Activated B cell treated with CpG ODN at 0.5 μM for 24 hours (primary cell): ENCODE measurements at regions of chr9 and their contacts with region 1.

Region 1: DNA sequence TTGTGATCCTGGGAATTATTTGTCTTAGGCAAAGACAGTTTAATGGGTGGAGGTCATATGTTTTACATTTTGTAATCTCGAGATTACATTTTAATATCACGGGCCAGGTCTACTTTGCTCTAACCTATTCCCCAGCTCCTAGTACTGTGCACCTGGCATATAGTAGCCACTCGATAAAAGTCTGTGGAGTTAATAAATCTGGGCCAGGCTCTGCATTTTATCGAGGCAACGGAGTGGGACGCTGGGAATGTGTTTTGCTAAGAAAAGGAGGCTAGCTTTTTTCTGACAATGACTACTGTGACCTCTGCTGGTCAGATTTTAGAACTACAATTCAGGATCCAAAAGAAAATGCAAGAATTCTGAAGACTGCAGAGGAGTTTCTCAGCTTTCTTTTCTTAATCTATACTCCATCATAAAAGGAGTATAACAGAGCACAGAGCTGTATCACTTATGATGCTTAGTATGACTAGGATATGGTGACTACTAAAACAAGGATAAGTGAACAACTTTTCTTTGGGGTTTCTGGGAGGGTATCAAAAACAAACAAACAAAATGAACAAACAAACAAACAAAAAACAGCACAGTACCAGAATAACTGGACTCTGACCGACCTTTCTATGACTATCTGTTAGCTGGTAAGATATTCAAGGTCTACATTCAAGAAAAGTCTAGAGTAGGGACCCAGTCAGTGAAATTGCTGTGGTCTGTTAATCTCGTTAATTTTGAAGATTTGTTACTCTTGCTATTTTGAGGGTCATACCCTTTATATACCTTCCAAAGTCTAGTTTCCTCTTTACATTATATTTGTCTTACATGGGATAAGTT is 46.1 kb upstream of the CER1 start:
- DNase-seq: no peak
- ATAC-seq: no peak
- H3K4me3 Mint-ChIP-seq: no peak overlapping the region
- H3K27ac Mint-ChIP-seq: no peak overlapping the region
- H3K4me1 Mint-ChIP-seq: no peaks in the 10 kb centered on the region
- H3K27me3 Mint-ChIP-seq: peaks cover 24% of the 10 kb centered on the region
- CTCF ChIP-seq: peak; percentile 84

Region 2: DNA sequence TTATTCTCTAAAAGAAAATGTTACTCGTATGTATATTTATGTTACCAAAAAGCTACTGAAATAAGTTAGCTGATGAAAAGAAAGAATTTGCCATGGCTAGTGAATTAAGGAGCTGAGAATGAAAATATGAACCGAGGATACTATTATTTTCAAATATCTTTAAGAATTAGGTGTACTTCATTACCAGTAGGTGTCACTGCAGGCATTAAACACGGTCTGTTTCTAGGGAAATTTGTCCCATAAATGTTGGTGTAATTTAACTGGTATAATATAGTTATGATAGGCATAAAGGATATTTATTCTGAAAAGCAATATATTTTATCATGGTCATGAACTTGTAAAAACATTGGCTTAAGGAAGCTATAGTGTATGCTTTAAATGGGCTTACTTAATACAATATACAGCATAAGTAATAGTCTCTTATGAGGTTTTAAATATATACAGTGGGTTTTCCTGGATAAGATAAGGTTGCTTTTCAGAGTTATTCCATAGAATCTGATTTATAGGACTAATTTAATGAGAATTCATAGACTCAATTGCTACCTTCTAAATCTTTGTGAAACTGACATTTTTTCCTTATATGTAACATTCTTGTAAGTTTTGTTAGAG is 1416.7 kb before region 1 on chr9:
- CTCF ChIA-PET with region 1: no interaction called
- POLR2A ChIA-PET with region 1: no interaction called
- intact Hi-C with region 1: loop called (anchors 5 kb)
- DNase-seq: no peak
- ATAC-seq: no peak
- H3K4me3 Mint-ChIP-seq: no peak overlapping the region
- H3K27ac Mint-ChIP-seq: no peak overlapping the region
- H3K4me1 Mint-ChIP-seq: no peaks in the 10 kb centered on the region
- H3K27me3 Mint-ChIP-seq: no peaks in the 10 kb centered on the region
- CTCF ChIP-seq: no peak

Region 3: GRCh38 chr9:14353222-14354056 is 415.2 kb before region 1 on chr9:
- CTCF ChIA-PET with region 1: interaction called, 3 read pairs
- POLR2A ChIA-PET with region 1: no interaction called
- intact Hi-C with region 1: loop called (anchors 2 kb)
- DNase-seq: peak; percentile 51
- ATAC-seq: no peak
- H3K4me3 Mint-ChIP-seq: no peak overlapping the region
- H3K27ac Mint-ChIP-seq: no peak overlapping the region
- H3K4me1 Mint-ChIP-seq: peaks cover 7% of the 10 kb centered on the region
- H3K27me3 Mint-ChIP-seq: peaks cover 57% of the 10 kb centered on the region
- CTCF ChIP-seq: no peak

Region 4: GRCh38 chr9:14441976-14442651 is 326.5 kb before region 1 on chr9:
- CTCF ChIA-PET with region 1: interaction called, 6 read pairs
- POLR2A ChIA-PET with region 1: no interaction called
- intact Hi-C with region 1: loop called (anchors 5 kb)
- DNase-seq: no peak
- ATAC-seq: no peak
- H3K4me3 Mint-ChIP-seq: no peak overlapping the region
- H3K27ac Mint-ChIP-seq: no peak overlapping the region
- H3K4me1 Mint-ChIP-seq: no peaks in the 10 kb centered on the region
- H3K27me3 Mint-ChIP-seq: no peaks in the 10 kb centered on the region
- CTCF ChIP-seq: no peak

Region 5: GRCh38 chr9:14466429-14466818 is 302.2 kb before region 1 on chr9:
- CTCF ChIA-PET with region 1: interaction called, 3 read pairs
- POLR2A ChIA-PET with region 1: no interaction called
- intact Hi-C with region 1: loop called (anchors 1 kb)
- DNase-seq: no peak
- ATAC-seq: no peak
- H3K4me3 Mint-ChIP-seq: no peak overlapping the region
- H3K27ac Mint-ChIP-seq: no peak overlapping the region
- H3K4me1 Mint-ChIP-seq: no peaks in the 10 kb centered on the region
- H3K27me3 Mint-ChIP-seq: peaks cover 3% of the 10 kb centered on the region
- CTCF ChIP-seq: no peak

Region 6: DNA sequence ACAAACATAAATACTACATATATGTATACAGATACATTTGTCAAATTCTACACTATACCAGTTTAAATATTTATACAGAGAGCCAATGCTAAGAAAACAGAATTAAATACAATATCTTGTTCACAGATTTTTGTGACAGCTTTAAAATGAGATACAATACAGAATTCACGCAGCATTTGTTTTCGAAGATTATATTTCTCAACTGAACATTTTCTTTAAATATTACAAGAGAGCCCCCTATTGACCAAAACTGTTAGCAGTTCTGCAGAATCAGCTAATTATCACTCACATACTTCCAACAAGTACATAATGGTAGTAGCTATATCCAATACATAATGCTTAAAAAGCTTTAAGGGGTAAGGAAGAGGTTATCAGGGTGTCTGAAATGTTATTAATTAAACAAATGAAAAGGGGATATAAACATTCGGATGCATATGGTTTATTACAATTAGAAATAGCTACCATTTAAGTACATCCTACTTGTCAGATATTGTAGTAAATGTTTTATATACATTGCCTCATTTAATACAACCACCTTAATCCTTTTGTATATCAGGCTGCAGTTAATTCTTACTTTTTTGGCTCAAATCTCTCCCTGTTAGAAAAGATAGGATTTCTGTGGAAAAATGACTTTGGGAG is 107.1 kb before region 1 on chr9:
- CTCF ChIA-PET with region 1: interaction called, 7 read pairs
- POLR2A ChIA-PET with region 1: no interaction called
- intact Hi-C with region 1: loop called (anchors 2 kb)
- DNase-seq: no peak
- ATAC-seq: no peak
- H3K4me3 Mint-ChIP-seq: no peak overlapping the region
- H3K27ac Mint-ChIP-seq: no peak overlapping the region
- H3K4me1 Mint-ChIP-seq: peaks cover 2% of the 10 kb centered on the region
- H3K27me3 Mint-ChIP-seq: no peaks in the 10 kb centered on the region
- CTCF ChIP-seq: no peak

Region 7: DNA sequence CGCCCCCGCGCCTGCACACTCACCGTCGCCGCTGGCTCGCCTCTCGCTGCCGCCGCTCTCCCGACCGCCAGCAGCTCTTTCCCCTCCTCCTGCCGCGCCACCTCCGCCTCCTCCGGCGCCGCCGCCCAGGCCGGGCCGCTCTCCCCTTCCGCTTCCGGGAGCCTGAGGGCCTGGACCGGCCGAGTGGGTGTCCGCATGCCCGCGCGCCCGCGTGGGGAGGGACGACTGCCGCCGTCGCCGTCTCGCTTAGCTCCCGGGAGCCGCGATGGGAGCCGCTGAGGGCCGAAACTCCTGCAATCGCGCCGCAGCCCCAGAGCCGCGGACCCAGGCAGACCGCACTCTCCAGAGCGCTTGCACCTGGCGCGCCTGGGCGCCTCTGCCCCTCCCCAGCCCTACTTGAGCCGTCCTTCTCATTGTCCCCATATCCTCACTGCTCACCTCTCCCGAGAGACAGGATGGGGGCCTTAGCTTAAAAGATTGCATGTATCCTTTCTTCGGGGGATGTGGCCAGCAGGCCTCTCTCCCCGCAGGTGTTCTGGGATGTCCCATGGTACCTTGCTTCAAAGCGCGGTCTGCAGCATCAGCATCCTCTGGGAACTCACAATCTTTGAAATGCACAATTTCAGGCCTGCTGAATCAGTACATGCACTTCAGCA is 75.3 kb before region 1 on chr9 and contains the start of gene ZDHHC21:
- CTCF ChIA-PET with region 1: interaction called, 4 read pairs
- POLR2A ChIA-PET with region 1: no interaction called
- intact Hi-C with region 1: loop called (anchors 1 kb)
- DNase-seq: peak; percentile 60
- ATAC-seq: peak; percentile 75
- H3K4me3 Mint-ChIP-seq: peak within 1 kb of the TSS; percentile 94
- H3K27ac Mint-ChIP-seq: peak within 1 kb of the TSS; percentile 93
- H3K4me1 Mint-ChIP-seq: peaks cover 51% of the 10 kb centered on the region
- H3K27me3 Mint-ChIP-seq: no peaks in the 10 kb centered on the region
- CTCF ChIP-seq: no peak
- total RNA-seq, gene ZDHHC21: 22.6 and 29.4 TPM in 2 replicates